Posterior vena cava (tissue), 2 donors: ENCODE measurements at regions of chr5 and their contacts with region 1.

Region 1: GRCh38 chr5:174935854-174936474 is 211.6 kb downstream of the MSX2 start:
- DNase-seq: no peak

Region 2: DNA sequence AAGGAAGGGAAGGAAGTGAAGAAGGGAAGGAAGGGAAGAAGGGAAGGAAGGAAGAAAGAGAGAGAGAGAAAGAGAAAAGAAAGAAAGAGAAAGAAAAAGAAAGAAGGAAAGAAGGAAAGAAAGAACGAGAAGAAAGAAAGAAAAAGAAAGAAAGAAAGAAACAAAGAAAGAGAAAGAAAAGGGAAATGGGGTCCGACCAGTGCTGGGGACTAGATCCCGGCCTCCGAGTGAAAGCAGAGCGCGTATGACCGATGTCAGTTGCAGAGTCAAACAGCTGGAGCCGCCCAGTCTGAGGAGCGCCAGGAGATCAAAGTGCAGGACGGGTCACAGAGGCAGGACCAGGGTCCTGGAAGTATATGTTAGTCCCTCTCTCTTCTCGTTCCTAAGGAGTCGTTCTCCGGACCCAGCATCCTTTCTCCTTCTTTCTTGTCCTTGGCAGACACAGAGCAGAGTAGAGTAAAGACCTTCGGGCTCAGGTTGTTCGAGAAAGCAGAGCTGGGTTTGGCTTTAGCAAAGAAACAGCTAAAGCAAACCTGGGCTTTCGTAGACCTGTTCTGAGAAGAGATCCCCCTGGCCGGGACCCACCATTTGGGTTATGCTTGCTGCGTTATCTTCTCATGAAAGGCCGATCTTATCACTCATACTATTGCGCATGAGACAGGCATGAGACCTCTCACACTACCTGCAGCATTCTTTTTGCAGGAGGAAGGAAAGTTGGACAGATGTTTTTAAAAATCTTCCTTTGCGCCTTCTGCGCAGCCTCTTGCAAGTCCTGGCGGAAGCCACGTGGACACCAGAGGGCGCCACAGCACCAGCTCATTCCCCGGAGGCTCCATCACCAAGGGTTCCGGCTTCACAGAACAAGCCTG is 516.8 kb before region 1 on chr5:
- intact Hi-C with region 1: loop called in 1 of 2 experiments (anchors 5 kb)
- DNase-seq: peak; percentile 97

Region 3: GRCh38 chr5:174920906-174921550 is 14.9 kb before region 1 on chr5:
- intact Hi-C with region 1: loop called in 1 of 2 experiments (anchors 1 kb)
- DNase-seq: no peak

Region 4: GRCh38 chr5:174951146-174951780 is 15.3 kb after region 1 on chr5:
- intact Hi-C with region 1: no loop called
- DNase-seq: no peak